ENCODE measurements at regions of chr13 and their contacts with region 1.

Region 1: DNA sequence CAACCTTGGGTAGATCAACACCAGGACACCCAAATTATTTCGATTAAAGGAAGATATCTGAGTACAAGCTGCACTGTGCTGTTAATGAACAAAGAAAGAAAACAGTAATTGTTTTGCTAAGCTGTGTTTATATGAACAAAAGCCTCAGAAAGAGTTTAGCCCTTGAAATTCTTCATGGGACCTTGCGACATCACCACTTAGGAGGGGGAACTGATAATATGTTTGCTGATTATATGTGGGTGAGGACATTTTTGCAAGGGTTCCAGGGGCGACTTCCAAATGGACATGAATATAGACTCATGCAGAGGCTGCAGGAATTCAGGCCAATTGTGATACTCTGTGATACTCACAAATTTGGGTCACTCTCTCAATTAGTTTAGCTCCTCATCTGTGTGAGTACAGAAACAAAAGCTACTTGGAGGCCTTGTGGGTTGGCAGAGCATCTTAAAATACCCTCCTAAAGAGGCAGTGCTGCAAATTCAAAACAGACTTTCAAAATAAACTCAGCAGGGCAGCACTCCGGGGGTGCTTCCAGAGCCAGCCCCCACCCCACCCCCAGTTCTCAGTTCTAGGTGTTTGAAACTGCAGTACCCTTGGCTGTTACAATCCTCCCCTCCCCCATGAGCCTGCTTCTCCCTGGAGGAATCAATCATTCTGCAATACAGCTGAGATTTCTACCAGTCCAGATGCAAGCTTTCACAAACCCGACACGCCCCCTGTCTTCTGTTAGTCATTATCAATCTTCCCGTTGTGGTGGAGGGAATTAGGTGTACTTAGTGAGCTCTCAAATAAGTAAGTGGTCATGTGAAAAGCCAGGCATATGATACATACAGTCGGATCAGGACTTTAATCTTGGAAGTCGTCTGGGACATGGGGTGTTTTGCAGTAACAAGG is 97.0 kb upstream of the MBNL2 start:
- DNase-seq: no peak
- H3K4me3 Mint-ChIP-seq: no peak overlapping the region
- H3K27ac Mint-ChIP-seq: no peak overlapping the region
- H3K4me1 Mint-ChIP-seq: peaks cover 15% of the 10 kb centered on the region
- H3K27me3 Mint-ChIP-seq: peaks cover 26% of the 10 kb centered on the region

Region 2: GRCh38 chr13:97257800-97258799 is 132.9 kb after region 1 on chr13:
- intact Hi-C with region 1: loop called (anchors 1 kb)
- DNase-seq: peak; percentile 67
- H3K4me3 Mint-ChIP-seq: peak overlapping the region; percentile 65
- H3K27ac Mint-ChIP-seq: peak overlapping the region; percentile 93
- H3K4me1 Mint-ChIP-seq: peaks cover 71% of the 10 kb centered on the region
- H3K27me3 Mint-ChIP-seq: no peaks in the 10 kb centered on the region

Region 3: GRCh38 chr13:97295283-97296182 is 170.4 kb after region 1 on chr13:
- intact Hi-C with region 1: loop called (anchors 1 kb)
- DNase-seq: no peak
- H3K4me3 Mint-ChIP-seq: no peak overlapping the region
- H3K27ac Mint-ChIP-seq: no peak overlapping the region
- H3K4me1 Mint-ChIP-seq: peaks cover 16% of the 10 kb centered on the region
- H3K27me3 Mint-ChIP-seq: no peaks in the 10 kb centered on the region

Region 4: DNA sequence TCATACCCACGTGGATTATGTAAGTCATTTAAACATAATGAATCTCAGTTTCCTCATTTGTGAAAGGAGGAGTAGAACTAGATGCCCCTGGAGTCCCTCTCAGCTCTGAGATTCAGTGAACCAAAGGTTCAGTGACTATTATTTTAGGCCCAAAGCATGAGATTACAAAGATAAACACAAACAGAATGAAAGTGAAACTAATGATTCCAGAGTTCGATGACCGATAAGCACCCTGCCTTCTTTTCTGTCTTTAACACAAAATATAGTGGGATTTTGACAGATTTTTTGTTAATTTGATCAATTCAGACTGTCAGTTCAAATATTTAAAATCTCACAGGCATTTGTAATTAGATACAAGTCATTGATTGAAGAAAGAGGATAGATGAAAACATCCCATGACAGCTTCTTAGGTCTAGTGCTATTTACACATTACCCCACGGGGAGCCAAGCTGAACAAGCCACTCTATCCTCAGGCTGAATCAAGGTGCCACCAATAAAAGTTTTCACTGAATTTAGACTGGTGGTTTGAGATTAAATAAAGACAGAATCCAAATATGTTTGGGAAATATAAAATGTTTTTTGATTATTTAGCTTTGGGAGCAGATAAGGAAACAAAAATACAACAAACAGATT is 244.2 kb after region 1 on chr13:
- intact Hi-C with region 1: no loop called
- DNase-seq: no peak
- H3K4me3 Mint-ChIP-seq: peak overlapping the region; percentile 84
- H3K27ac Mint-ChIP-seq: peak overlapping the region; percentile 69
- H3K4me1 Mint-ChIP-seq: peaks cover 12% of the 10 kb centered on the region
- H3K27me3 Mint-ChIP-seq: no peaks in the 10 kb centered on the region

Region 5: GRCh38 chr13:97432917-97433726 is 308.0 kb after region 1 on chr13:
- intact Hi-C with region 1: loop called (anchors 5 kb)
- DNase-seq: peak; percentile 100
- H3K4me3 Mint-ChIP-seq: peak overlapping the region; percentile 94
- H3K27ac Mint-ChIP-seq: peak overlapping the region; percentile 98
- H3K4me1 Mint-ChIP-seq: peaks cover 32% of the 10 kb centered on the region
- H3K27me3 Mint-ChIP-seq: peaks cover 12% of the 10 kb centered on the region

Measured in activated CD4-positive, alpha-beta T cell treated with anti-CD3 and anti-CD28 coated beads, Interleukin-2, amount 10 ng/mL, durations not matched to agents 24 days and 14 days (primary cell).